Ovary (tissue), 10 donors: ENCODE measurements at regions of chrX and their contacts with region 1.

Region 1: GRCh38 chrX:46903458-46904242 is 8.6 kb upstream of the JADE3 start:
- DNase-seq: peak; percentile 81 to 88 (median 81)
- H3K4me3 ChIP-seq: peak overlapping the region; percentile 36
- H3K27ac ChIP-seq: no peak overlapping the region
- H3K4me1 ChIP-seq: no peaks in the 10 kb centered on the region
- H3K27me3 ChIP-seq: no peaks in the 10 kb centered on the region
- CTCF ChIP-seq: peak in 2 of 3 donors; percentile 65 to 77
- EP300 ChIP-seq: no peak
- POLR2A ChIP-seq: no peak

Region 2: GRCh38 chrX:47030339-47030738 is 126.7 kb after region 1 on chrX:
- intact Hi-C with region 1: loop called in 1 of 4 experiments (anchors 5 kb)
- DNase-seq: no peak
- H3K4me3 ChIP-seq: no peak overlapping the region
- H3K27ac ChIP-seq: no peak overlapping the region
- H3K4me1 ChIP-seq: no peaks in the 10 kb centered on the region
- H3K27me3 ChIP-seq: no peaks in the 10 kb centered on the region
- CTCF ChIP-seq: peak; percentile 29 to 50 (median 33)
- EP300 ChIP-seq: no peak
- POLR2A ChIP-seq: no peak

Region 3: DNA sequence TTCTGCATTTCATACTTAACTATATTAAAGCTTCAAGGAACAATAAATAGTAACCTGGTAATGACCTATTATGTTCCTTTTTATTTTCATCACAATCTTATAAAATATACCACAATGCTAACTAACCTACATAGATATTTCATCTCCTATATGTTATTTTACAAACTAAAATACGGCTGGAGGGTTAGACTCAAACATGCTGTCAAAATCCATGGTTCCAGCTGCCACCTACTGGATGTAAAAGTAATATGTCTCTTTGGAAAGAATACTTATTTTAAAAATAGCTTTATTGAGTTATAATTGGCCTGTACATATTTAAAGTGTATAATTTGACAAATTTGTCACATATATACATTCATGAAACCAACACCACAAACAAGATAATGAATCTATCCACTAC is 189.6 kb after region 1 on chrX:
- intact Hi-C with region 1: loop called in 1 of 4 experiments (anchors 5 kb)
- DNase-seq: no peak
- H3K4me3 ChIP-seq: no peak overlapping the region
- H3K27ac ChIP-seq: no peak overlapping the region
- H3K4me1 ChIP-seq: no peaks in the 10 kb centered on the region
- H3K27me3 ChIP-seq: no peaks in the 10 kb centered on the region
- CTCF ChIP-seq: peak in 2 of 3 donors; percentile 44 to 57
- EP300 ChIP-seq: no peak
- POLR2A ChIP-seq: no peak